Activated CD8-positive, alpha-beta T cell treated with anti-CD3 and anti-CD28 coated beads for 36 hours (primary cell): ENCODE measurements at regions of chr2 and their contacts with region 1.

Region 1: GRCh38 chr2:26959331-26959730 is 11.1 kb upstream of the MAPRE3 start:
- DNase-seq: no peak
- ATAC-seq: no peak
- H3K4me3 Mint-ChIP-seq: no peak overlapping the region
- H3K27ac Mint-ChIP-seq: no peak overlapping the region
- H3K4me1 Mint-ChIP-seq: no peaks in the 10 kb centered on the region
- H3K27me3 Mint-ChIP-seq: peaks cover 18% of the 10 kb centered on the region
- CTCF ChIP-seq: no peak

Region 2: DNA sequence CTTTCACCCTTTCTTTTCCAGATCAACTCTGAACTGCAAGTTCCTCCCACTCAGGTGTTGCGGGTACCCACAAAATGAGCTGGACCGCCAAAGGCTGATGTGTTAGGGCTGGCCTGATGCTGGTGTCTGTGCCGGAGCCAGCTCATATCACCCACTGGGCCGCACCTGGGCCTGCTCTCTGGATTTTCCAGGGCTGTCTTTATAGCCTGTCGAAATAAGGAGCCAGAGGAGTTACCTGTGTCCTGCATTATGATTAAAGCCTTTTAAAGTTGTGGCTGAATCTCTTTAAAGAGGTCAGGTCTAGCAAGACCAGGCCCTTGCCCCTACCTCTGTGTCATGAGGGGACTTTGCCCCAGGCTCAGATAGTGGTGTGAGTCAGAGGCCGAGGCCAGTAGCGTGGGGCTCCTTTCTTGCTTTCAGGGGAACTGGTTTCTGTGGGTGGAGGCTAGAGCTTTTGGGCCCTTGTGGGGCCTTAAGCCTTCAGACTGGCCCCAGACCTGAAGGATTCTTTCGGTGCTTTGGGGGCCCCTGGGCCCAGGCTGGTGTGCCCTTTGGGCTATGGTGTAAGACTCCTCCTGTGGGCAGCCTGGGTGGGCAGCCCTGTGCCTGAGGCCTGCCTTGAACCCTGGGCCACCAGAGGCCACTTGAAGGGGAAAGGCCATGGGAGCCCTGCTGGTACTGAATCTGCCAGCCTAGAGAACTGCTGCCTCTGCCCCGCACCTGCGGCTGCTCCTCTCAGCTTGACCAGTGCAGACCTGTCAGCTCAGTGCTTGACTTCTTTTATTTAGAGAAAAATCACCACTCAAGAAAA is 502.7 kb before region 1 on chr2:
- CTCF ChIA-PET with region 1: no interaction called
- POLR2A ChIA-PET with region 1: no interaction called
- intact Hi-C with region 1: no loop called
- DNase-seq: no peak
- ATAC-seq: no peak
- H3K4me3 Mint-ChIP-seq: no peak overlapping the region
- H3K27ac Mint-ChIP-seq: no peak overlapping the region
- H3K4me1 Mint-ChIP-seq: no peaks in the 10 kb centered on the region
- H3K27me3 Mint-ChIP-seq: no peaks in the 10 kb centered on the region
- CTCF ChIP-seq: no peak

Region 3: GRCh38 chr2:26745609-26746327 is 213.6 kb before region 1 on chr2:
- CTCF ChIA-PET with region 1: no interaction called
- POLR2A ChIA-PET with region 1: no interaction called
- intact Hi-C with region 1: no loop called
- DNase-seq: peak; percentile 91
- ATAC-seq: peak; percentile 79
- H3K4me3 Mint-ChIP-seq: no peak overlapping the region
- H3K27ac Mint-ChIP-seq: no peak overlapping the region
- H3K4me1 Mint-ChIP-seq: peaks cover 3% of the 10 kb centered on the region
- H3K27me3 Mint-ChIP-seq: no peaks in the 10 kb centered on the region
- CTCF ChIP-seq: peak; percentile 86

Region 4: DNA sequence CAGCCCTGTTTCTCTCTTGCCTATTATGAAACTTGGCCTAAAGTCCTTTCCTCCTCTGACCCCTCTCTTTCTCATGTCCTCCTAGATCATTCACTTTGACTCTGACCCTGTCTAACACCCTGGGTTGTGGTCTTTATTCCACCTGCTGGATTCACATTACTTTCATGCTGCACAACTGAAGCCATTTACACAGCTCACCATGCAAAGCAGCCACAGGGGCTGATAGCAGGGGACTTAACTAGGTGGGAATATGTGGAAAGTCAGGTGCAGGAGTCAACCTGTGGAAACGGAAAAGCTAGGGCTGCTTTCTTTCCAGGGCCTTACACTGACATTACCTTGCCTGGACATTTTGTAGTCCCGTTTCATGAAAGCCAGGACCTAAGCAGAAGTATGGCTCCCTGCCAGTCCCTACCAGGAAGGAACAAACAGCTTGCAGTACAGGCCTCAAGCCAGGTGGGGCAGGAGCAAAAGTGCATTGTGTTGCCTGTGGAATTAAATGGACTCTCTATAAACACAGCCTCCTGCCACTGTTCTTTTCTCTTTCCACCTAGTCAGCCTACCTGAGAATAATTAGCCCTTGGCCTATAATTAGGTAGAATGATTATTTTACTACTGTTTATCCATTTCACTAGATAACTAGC is 22.9 kb after region 1 on chr2:
- CTCF ChIA-PET with region 1: interaction called, 30 read pairs
- POLR2A ChIA-PET with region 1: no interaction called
- intact Hi-C with region 1: no loop called
- DNase-seq: peak; percentile 42
- ATAC-seq: peak; percentile 76
- H3K4me3 Mint-ChIP-seq: no peak overlapping the region
- H3K27ac Mint-ChIP-seq: no peak overlapping the region
- H3K4me1 Mint-ChIP-seq: no peaks in the 10 kb centered on the region
- H3K27me3 Mint-ChIP-seq: no peaks in the 10 kb centered on the region
- CTCF ChIP-seq: no peak

Region 5: GRCh38 chr2:26988058-26988860 is 28.9 kb after region 1 on chr2:
- CTCF ChIA-PET with region 1: interaction called, 21 read pairs
- POLR2A ChIA-PET with region 1: no interaction called
- intact Hi-C with region 1: no loop called
- DNase-seq: no peak
- ATAC-seq: no peak
- H3K4me3 Mint-ChIP-seq: no peak overlapping the region
- H3K27ac Mint-ChIP-seq: no peak overlapping the region
- H3K4me1 Mint-ChIP-seq: no peaks in the 10 kb centered on the region
- H3K27me3 Mint-ChIP-seq: no peaks in the 10 kb centered on the region
- CTCF ChIP-seq: no peak